ENCODE measurements at regions of chr14 and their contacts with region 1.

Region 1: GRCh38 chr14:23567192-23568020 is at the start of gene AP1G2:
- DNase-seq: peak; percentile 87 to 93 (median 91)
- H3K4me3 ChIP-seq: peak within 1 kb of the TSS in 3 of 4 donors; percentile 41 to 69 (median 61)
- H3K27ac ChIP-seq: peak within 1 kb of the TSS in 3 of 5 donors; percentile 66 to 80 (median 73)
- H3K4me1 ChIP-seq: peaks cover 0 to 16% of the 10 kb centered on the region in 2 donors
- H3K27me3 ChIP-seq: no peaks in the 10 kb centered on the region
- CTCF ChIP-seq: no peak
- POLR2A ChIP-seq: peak in 1 of 2 donors; percentile 22
- total RNA-seq, gene AP1G2: 35.2 to 142 (median 78.9) TPM

Region 2: GRCh38 chr14:23320774-23321571 is 246.4 kb before region 1 on chr14 and contains the start of gene PABPN1:
- intact Hi-C with region 1: loop called in 1 of 2 experiments (anchors 10 kb)
- DNase-seq: peak; percentile 99 to 100 (median 100)
- H3K4me3 ChIP-seq: peak within 1 kb of the TSS in 3 of 4 donors; percentile 19 to 86 (median 72)
- H3K27ac ChIP-seq: peak within 1 kb of the TSS; percentile 76 to 99 (median 90)
- H3K4me1 ChIP-seq: peaks cover 19 to 30% of the 10 kb centered on the region in 2 donors
- H3K27me3 ChIP-seq: no peaks in the 10 kb centered on the region
- CTCF ChIP-seq: no peak
- POLR2A ChIP-seq: peak; percentile 63 to 87
- total RNA-seq, gene PABPN1: 18.3 to 200 (median 79.3) TPM

Region 3: GRCh38 chr14:23339506-23340268 is 227.7 kb before region 1 on chr14:
- intact Hi-C with region 1: loop called in 1 of 2 experiments (anchors 10 kb)
- DNase-seq: peak in 1 of 7 donors; percentile 1
- H3K4me3 ChIP-seq: no peak overlapping the region
- H3K27ac ChIP-seq: no peak overlapping the region
- H3K4me1 ChIP-seq: no peaks in the 10 kb centered on the region
- H3K27me3 ChIP-seq: no peaks in the 10 kb centered on the region
- CTCF ChIP-seq: no peak
- POLR2A ChIP-seq: no peak

Region 4: GRCh38 chr14:23478111-23478759 is 89.2 kb before region 1 on chr14:
- intact Hi-C with region 1: loop called (anchors 5 kb)
- DNase-seq: peak; percentile 60 to 87 (median 69)
- H3K4me3 ChIP-seq: no peak overlapping the region
- H3K27ac ChIP-seq: no peak overlapping the region
- H3K4me1 ChIP-seq: no peaks in the 10 kb centered on the region
- H3K27me3 ChIP-seq: no peaks in the 10 kb centered on the region
- CTCF ChIP-seq: peak; percentile 62 to 88 (median 82)
- POLR2A ChIP-seq: no peak

Region 5: DNA sequence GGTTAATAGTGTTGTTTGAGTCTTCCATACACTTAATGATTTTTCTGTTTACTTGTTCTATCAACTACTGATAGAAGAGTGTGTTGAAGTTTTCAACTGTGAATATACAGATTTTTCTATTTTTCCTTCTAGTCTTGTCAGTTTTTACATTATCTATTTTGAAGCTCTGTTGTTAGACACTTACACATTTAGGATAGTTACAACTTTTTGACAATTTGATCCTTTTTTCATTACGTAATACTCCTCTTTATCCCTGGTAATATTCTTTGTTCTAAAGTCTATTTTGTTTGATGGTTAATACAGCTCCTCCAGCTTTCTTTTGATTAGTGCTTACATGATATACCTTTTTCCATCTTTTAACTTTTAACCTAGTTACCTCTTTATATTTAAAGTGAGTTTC is 113.9 kb after region 1 on chr14:
- intact Hi-C with region 1: no loop called
- DNase-seq: no peak
- H3K4me3 ChIP-seq: no peak overlapping the region
- H3K27ac ChIP-seq: no peak overlapping the region
- H3K4me1 ChIP-seq: no peaks in the 10 kb centered on the region
- H3K27me3 ChIP-seq: no peaks in the 10 kb centered on the region
- CTCF ChIP-seq: no peak
- POLR2A ChIP-seq: no peak

Region 6: GRCh38 chr14:24075485-24076301 is 508.3 kb after region 1 on chr14:
- intact Hi-C with region 1: no loop called
- DNase-seq: no peak
- H3K4me3 ChIP-seq: no peak overlapping the region
- H3K27ac ChIP-seq: no peak overlapping the region
- H3K4me1 ChIP-seq: no peaks in the 10 kb centered on the region
- H3K27me3 ChIP-seq: no peaks in the 10 kb centered on the region
- CTCF ChIP-seq: no peak
- POLR2A ChIP-seq: no peak

Measured in adrenal gland (tissue), 19 donors.